ENCODE measurements at regions of chr10 and their contacts with region 1.

Region 1: DNA sequence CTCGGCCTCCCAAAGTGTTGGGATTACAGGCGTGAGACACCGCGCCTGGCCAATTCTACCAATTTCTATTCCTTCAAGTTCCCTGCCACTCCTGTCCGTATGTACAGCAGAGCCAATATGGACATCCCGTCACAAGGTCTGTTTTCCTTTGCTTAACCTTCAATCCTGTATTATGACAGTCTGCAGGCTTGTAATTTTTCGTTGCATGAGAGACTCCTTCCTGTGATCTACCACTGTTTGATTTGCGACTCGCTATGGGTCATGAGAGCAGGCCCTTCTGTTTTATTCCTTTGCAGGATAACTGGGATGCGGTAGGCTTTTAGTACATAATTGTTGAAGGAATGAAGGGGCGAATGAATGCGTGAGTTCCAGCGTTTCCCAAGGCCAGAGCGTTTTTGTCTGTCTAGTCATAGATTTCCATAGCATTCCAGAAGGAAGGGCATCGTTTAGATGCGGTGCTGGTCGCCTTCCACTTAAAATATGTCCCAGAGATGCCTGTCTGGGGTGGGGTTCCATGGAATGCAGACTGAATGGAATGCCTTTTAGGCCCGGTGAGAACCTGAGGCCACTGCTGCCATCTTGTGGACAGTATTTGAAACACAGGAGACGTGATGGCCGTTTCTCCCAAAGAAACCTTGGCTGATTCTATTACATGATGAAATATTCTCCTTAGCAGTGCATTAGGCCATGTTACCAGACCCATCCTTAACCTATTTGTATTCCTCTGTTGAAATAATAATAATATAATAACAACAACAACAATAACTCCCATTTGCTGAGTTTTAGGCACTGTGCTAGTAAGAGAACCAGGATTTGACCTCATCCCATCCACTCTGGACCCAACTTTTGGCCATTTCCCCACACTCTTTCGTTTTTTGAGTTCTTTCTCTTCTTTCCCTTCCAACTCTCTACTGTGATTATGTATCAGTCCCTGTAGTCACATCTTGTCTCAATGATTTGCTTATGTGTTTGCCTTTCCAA is 193.2 kb downstream of the MYOF start:
- DNase-seq: no peak
- ATAC-seq: peak; percentile 70
- H3K4me3 ChIP-seq: no peak overlapping the region
- H3K27ac ChIP-seq: no peak overlapping the region
- H3K4me1 ChIP-seq: no peaks in the 10 kb centered on the region
- H3K27me3 ChIP-seq: 0 out of 4 replicates have a peak, but pooled peaks cover 0 to 2% of the 10 kb centered on the region in 2 experiments
- CTCF ChIP-seq: peak; percentile 61 to 72 (median 70)
- EP300 ChIP-seq: no peak
- POLR2A ChIP-seq: no peak
- RAD21 ChIP-seq: peak; percentile 88

Region 2: GRCh38 chr10:93030409-93030808 is 258.5 kb before region 1 on chr10:
- CTCF ChIA-PET with region 1: no interaction called
- POLR2A ChIA-PET with region 1: no interaction called
- RAD21 ChIA-PET with region 1: no interaction called
- SMC1A ChIA-PET with region 1: no interaction called
- in situ Hi-C with region 1: no loop called
- intact Hi-C with region 1: no loop called
- DNase-seq: no peak
- ATAC-seq: no peak
- H3K4me3 ChIP-seq: no peak overlapping the region
- H3K27ac ChIP-seq: no peak overlapping the region
- H3K4me1 ChIP-seq: no peaks in the 10 kb centered on the region
- H3K27me3 ChIP-seq: no peaks in the 10 kb centered on the region
- CTCF ChIP-seq: no peak
- EP300 ChIP-seq: no peak
- POLR2A ChIP-seq: no peak
- RAD21 ChIP-seq: no peak

Region 3: DNA sequence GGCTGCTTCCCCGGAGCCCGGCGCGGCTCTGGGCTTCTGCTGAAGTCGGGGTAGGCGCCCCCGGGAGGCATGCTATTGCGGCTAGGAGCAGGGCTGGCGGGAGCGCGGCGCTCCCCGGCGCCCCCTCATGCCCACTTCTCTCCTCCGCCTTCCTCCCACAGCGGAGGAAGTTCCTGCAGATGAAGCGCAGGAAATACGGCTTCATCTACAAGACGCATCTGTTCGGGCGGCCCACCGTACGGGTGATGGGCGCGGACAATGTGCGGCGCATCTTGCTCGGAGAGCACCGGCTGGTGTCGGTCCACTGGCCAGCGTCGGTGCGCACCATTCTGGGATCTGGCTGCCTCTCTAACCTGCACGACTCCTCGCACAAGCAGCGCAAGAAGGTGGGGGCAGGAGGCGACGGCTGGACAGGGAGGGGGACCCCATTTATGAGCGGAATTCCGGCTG is 214.8 kb before region 1 on chr10:
- CTCF ChIA-PET with region 1: interaction called, 18 read pairs
- POLR2A ChIA-PET with region 1: no interaction called
- RAD21 ChIA-PET with region 1: interaction called, 4 read pairs
- SMC1A ChIA-PET with region 1: interaction called, 5 read pairs
- in situ Hi-C with region 1: no loop called
- intact Hi-C with region 1: no loop called
- DNase-seq: no peak
- ATAC-seq: peak; percentile 26
- H3K4me3 ChIP-seq: peak overlapping the region; percentile 27; the same call in 1 of the 2 replicates
- H3K27ac ChIP-seq: no peak overlapping the region
- H3K4me1 ChIP-seq: peaks cover 18% of the 10 kb centered on the region
- H3K27me3 ChIP-seq: peaks cover 28 to 32% of the 10 kb centered on the region in 2 experiments; a peak in 3 of 4 replicates
- CTCF ChIP-seq: no peak
- EP300 ChIP-seq: no peak
- POLR2A ChIP-seq: no peak
- RAD21 ChIP-seq: no peak

Region 4: GRCh38 chr10:93115661-93116383 is 173.1 kb before region 1 on chr10:
- CTCF ChIA-PET with region 1: interaction called, 39 read pairs
- POLR2A ChIA-PET with region 1: no interaction called
- RAD21 ChIA-PET with region 1: interaction called, 14 read pairs
- SMC1A ChIA-PET with region 1: interaction called, 9 read pairs
- in situ Hi-C with region 1: no loop called
- intact Hi-C with region 1: loop called (anchors 2 kb)
- DNase-seq: peak; percentile 32
- ATAC-seq: peak; percentile 96
- H3K4me3 ChIP-seq: no peak overlapping the region
- H3K27ac ChIP-seq: no peak overlapping the region
- H3K4me1 ChIP-seq: peaks cover 8% of the 10 kb centered on the region; the same call in 1 of the 2 replicates
- H3K27me3 ChIP-seq: no peaks in the 10 kb centered on the region
- CTCF ChIP-seq: peak; percentile 61 to 72 (median 62)
- EP300 ChIP-seq: no peak
- POLR2A ChIP-seq: no peak
- RAD21 ChIP-seq: peak; percentile 83

Region 5: DNA sequence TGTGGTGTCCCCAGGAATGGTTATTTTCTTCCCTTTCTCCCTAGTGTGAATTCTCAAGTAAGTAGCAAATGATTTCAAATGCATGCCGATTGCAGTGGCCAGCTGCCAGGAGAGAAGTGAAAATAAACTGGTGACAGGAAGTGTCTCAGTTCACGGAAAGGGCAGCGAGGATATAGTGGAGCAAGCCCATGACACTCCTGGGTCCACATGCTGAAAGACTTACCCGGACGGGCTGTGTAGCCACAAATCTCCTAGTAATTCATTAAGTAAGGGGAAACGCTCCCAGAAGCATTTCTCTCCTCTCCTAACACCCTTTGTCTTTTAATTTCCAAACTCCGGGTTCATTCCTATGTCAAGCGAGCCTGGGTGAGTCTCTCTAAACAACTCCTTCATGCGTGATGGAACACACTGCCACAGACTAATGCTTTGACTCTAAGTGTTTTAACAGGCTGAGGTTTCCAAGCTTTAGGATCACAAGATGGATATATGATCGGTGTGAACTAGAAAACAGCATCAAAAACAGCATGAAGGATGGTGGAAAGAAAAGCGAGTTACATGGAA is 89.7 kb before region 1 on chr10:
- CTCF ChIA-PET with region 1: no interaction called
- POLR2A ChIA-PET with region 1: no interaction called
- RAD21 ChIA-PET with region 1: no interaction called
- SMC1A ChIA-PET with region 1: no interaction called
- in situ Hi-C with region 1: no loop called
- intact Hi-C with region 1: no loop called
- DNase-seq: no peak
- ATAC-seq: peak; percentile 35; the same call in 1 of the 3 replicates
- H3K4me3 ChIP-seq: peak overlapping the region; percentile 43; the same call in 1 of the 2 replicates
- H3K27ac ChIP-seq: no peak overlapping the region
- H3K4me1 ChIP-seq: peaks cover 7% of the 10 kb centered on the region
- H3K27me3 ChIP-seq: no peaks in the 10 kb centered on the region
- CTCF ChIP-seq: no peak
- EP300 ChIP-seq: no peak
- POLR2A ChIP-seq: no peak
- RAD21 ChIP-seq: no peak

Region 6: GRCh38 chr10:93224005-93224779 is 64.8 kb before region 1 on chr10:
- CTCF ChIA-PET with region 1: interaction called, 9 read pairs
- POLR2A ChIA-PET with region 1: no interaction called
- RAD21 ChIA-PET with region 1: interaction called, 3 read pairs
- SMC1A ChIA-PET with region 1: no interaction called
- in situ Hi-C with region 1: no loop called
- intact Hi-C with region 1: loop called (anchors 2 kb)
- DNase-seq: peak; percentile 3
- ATAC-seq: no peak
- H3K4me3 ChIP-seq: no peak overlapping the region
- H3K27ac ChIP-seq: no peak overlapping the region
- H3K4me1 ChIP-seq: no peaks in the 10 kb centered on the region
- H3K27me3 ChIP-seq: peaks cover 0 to 3% of the 10 kb centered on the region in 2 experiments; a peak in 2 of 4 replicates
- CTCF ChIP-seq: peak in 2 of 3 experiments; percentile 3 to 23; a peak in 1 of 6 replicates
- EP300 ChIP-seq: no peak
- POLR2A ChIP-seq: no peak
- RAD21 ChIP-seq: no peak

Measured in GM12878 (cell line).